Dorsolateral prefrontal cortex (tissue), 120 donors: ENCODE measurements at regions of chr7 and their contacts with region 1.

Region 1: GRCh38 chr7:28700790-28701203 is 257.3 kb downstream of the TRIL start:
- DNase-seq: no peak
- H3K4me3 ChIP-seq: no peak overlapping the region
- H3K27ac ChIP-seq: peak overlapping the region in 35 of 59 donors; percentile 1 to 75 (median 38)
- H3K27me3 ChIP-seq: no peaks in the 10 kb centered on the region
- CTCF ChIP-seq: no peak

Region 2: GRCh38 chr7:28479507-28479947 is 221.3 kb before region 1 on chr7:
- intact Hi-C with region 1: no loop called
- DNase-seq: no peak
- H3K4me3 ChIP-seq: no peak overlapping the region
- H3K27ac ChIP-seq: no peak overlapping the region
- H3K27me3 ChIP-seq: peaks cover 0 to 7% (median 0%) of the 10 kb centered on the region in 45 donors
- CTCF ChIP-seq: no peak

Region 3: GRCh38 chr7:28748933-28749584 is 48.3 kb after region 1 on chr7:
- intact Hi-C with region 1: loop called in 1 of 2 experiments (anchors 5 kb)
- DNase-seq: no peak
- H3K4me3 ChIP-seq: peak overlapping the region in 1 of 59 donors; percentile 12
- H3K27ac ChIP-seq: peak overlapping the region in 57 of 59 donors; percentile 2 to 98 (median 83)
- H3K27me3 ChIP-seq: no peaks in the 10 kb centered on the region
- CTCF ChIP-seq: no peak

Region 4: DNA sequence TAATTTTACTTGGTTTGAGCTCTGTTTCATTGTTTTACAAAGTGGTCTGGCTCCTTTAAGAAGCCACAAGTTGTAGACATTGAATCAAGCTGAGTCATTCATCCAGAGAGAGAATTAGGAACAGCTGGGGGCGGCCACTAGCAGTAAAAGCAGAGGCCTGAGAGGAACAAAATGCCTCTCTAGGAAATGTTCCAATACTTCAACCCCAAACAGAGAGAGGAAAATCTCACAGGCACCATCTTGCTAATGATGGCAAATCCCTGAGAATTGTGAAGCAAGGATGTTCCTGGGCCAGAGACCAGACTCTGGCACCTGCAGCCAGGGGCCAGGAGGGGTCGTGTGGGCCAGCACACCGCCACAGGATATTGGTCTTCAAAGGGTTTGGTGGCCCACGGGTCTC is 283.8 kb after region 1 on chr7:
- intact Hi-C with region 1: no loop called
- DNase-seq: peak in 6 of 10 donors; percentile 43 to 78 (median 62)
- H3K4me3 ChIP-seq: no peak overlapping the region
- H3K27ac ChIP-seq: peak overlapping the region in 34 of 59 donors; percentile 12 to 84 (median 54)
- H3K27me3 ChIP-seq: peaks cover 0 to 3% (median 0%) of the 10 kb centered on the region in 45 donors
- CTCF ChIP-seq: peak in 1 of 56 donors; percentile 10